Activated CD8-positive, alpha-beta T cell treated with anti-CD3 and anti-CD28 coated beads for 36 hours (primary cell): ENCODE measurements at regions of chr1 and their contacts with region 1.

Region 1: GRCh38 chr1:235971571-235972310 is 93.1 kb downstream of the NID1 start:
- DNase-seq: peak; percentile 95
- ATAC-seq: peak; percentile 99
- H3K4me3 Mint-ChIP-seq: peak overlapping the region; percentile 70
- H3K27ac Mint-ChIP-seq: peak overlapping the region; percentile 94
- H3K4me1 Mint-ChIP-seq: peaks cover 16% of the 10 kb centered on the region
- H3K27me3 Mint-ChIP-seq: no peaks in the 10 kb centered on the region
- CTCF ChIP-seq: peak; percentile 83

Region 2: GRCh38 chr1:235504496-235505222 is 467.1 kb before region 1 on chr1:
- CTCF ChIA-PET with region 1: interaction called, 19 read pairs
- POLR2A ChIA-PET with region 1: no interaction called
- intact Hi-C with region 1: no loop called
- DNase-seq: peak; percentile 99
- ATAC-seq: peak; percentile 93
- H3K4me3 Mint-ChIP-seq: peak overlapping the region; percentile 89
- H3K27ac Mint-ChIP-seq: peak overlapping the region; percentile 98
- H3K4me1 Mint-ChIP-seq: peaks cover 30% of the 10 kb centered on the region
- H3K27me3 Mint-ChIP-seq: no peaks in the 10 kb centered on the region
- CTCF ChIP-seq: peak; percentile 92

Region 3: GRCh38 chr1:235783148-235783776 is 188.5 kb before region 1 on chr1:
- CTCF ChIA-PET with region 1: interaction called, 49 read pairs
- POLR2A ChIA-PET with region 1: no interaction called
- intact Hi-C with region 1: no loop called
- DNase-seq: no peak
- ATAC-seq: no peak
- H3K4me3 Mint-ChIP-seq: no peak overlapping the region
- H3K27ac Mint-ChIP-seq: no peak overlapping the region
- H3K4me1 Mint-ChIP-seq: no peaks in the 10 kb centered on the region
- H3K27me3 Mint-ChIP-seq: no peaks in the 10 kb centered on the region
- CTCF ChIP-seq: peak; percentile 78

Region 4: GRCh38 chr1:235843461-235843961 is 128.2 kb before region 1 on chr1:
- CTCF ChIA-PET with region 1: interaction called, 76 read pairs
- POLR2A ChIA-PET with region 1: interaction called, 5 read pairs
- intact Hi-C with region 1: no loop called
- DNase-seq: no peak
- ATAC-seq: peak; percentile 69
- H3K4me3 Mint-ChIP-seq: no peak overlapping the region
- H3K27ac Mint-ChIP-seq: no peak overlapping the region
- H3K4me1 Mint-ChIP-seq: peaks cover 78% of the 10 kb centered on the region
- H3K27me3 Mint-ChIP-seq: no peaks in the 10 kb centered on the region
- CTCF ChIP-seq: peak; percentile 71

Region 5: DNA sequence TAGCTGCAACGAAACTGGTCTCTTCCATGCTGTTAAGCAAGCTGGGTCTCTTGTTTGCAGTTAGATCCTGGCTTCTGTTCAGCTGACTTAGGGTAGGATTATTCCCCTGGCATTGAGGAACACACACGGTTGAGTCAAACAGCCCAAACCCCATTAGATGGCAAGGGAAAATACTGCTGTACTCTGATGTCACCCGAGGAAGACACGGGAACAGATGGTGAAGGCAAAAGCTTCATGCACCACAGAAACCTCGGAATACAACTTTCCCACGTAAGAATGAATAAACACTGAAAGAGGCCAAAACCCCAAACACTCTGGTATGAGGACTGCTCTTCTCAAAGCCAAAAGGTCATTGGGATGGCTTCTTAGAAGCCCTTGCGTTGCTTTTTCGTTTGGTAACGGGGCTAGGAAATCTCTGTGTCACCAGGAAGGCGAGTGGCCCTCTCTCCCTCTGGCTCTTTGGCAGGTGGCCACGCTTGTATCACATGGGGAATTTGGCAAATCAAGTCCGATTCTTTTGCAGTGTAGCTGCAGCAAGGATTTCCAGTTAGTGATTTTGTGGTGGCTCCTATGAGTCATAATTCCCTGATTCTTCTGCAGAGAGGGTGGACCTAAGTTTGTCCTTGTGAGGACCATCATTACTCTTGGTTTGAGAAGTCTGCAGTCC is 88.3 kb before region 1 on chr1:
- CTCF ChIA-PET with region 1: interaction called, 30 read pairs
- POLR2A ChIA-PET with region 1: no interaction called
- intact Hi-C with region 1: no loop called
- DNase-seq: peak; percentile 62
- ATAC-seq: peak; percentile 1
- H3K4me3 Mint-ChIP-seq: peak overlapping the region; percentile 65
- H3K27ac Mint-ChIP-seq: peak overlapping the region; percentile 55
- H3K4me1 Mint-ChIP-seq: peaks cover 63% of the 10 kb centered on the region
- H3K27me3 Mint-ChIP-seq: no peaks in the 10 kb centered on the region
- CTCF ChIP-seq: no peak

Region 6: DNA sequence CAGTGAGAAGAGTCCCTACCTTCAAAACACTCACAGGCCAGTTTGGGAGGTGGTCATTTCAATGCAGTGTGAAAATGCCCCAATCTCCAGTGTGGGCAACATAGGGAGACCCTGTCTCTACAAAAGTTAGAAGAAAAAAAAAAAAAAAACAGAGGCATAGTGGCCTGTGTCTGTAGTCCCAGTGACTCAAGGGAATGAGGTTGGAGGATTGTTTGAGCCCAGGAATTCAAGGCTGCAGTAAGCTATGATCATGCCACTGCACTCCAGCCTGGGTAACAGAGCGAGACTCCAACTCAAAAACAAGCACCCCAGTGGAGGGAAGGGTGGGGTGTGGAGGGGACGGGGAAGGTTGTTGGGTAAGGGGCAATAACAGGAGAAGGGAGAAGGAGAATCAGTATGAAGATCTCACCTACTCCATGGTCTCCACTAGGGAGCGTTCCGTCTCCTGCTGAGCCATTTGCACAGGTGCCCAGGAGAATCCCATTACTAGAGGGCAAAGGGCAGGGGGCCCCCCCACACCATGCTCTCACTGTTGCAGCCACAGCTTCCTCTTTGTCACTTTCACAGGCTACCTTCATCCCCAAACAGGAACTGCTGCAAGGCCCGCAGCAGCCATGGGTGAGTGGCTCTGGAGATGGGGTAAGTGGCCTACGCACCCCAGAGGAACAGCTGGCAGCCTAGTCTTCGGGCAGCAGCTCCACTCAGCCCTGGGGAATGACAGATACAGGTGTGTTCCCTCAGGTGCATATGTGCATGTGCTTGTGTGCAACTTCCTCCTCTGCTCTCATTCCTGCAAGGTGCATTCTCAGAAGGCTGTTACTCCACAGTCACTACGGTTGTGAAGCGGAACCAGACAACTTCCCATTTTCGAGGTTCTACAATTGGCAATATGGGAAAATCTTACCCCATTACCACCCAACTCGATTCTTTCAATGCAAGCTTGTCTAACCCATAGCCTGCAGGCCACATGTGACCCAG is 17.1 kb before region 1 on chr1:
- CTCF ChIA-PET with region 1: interaction called, 72 read pairs
- POLR2A ChIA-PET with region 1: interaction called, 7 read pairs
- intact Hi-C with region 1: no loop called
- DNase-seq: peak; percentile 80
- ATAC-seq: peak; percentile 82
- H3K4me3 Mint-ChIP-seq: no peak overlapping the region
- H3K27ac Mint-ChIP-seq: peak overlapping the region; percentile 26
- H3K4me1 Mint-ChIP-seq: peaks cover 52% of the 10 kb centered on the region
- H3K27me3 Mint-ChIP-seq: no peaks in the 10 kb centered on the region
- CTCF ChIP-seq: no peak

Region 7: GRCh38 chr1:236064674-236065508 is 93.2 kb after region 1 on chr1 and contains the start of gene NID1:
- CTCF ChIA-PET with region 1: interaction called, 10 read pairs
- POLR2A ChIA-PET with region 1: no interaction called
- intact Hi-C with region 1: no loop called
- DNase-seq: peak; percentile 13
- ATAC-seq: peak; percentile 19
- H3K4me3 Mint-ChIP-seq: peak within 1 kb of the TSS; percentile 47
- H3K27ac Mint-ChIP-seq: no peak within 1 kb of the TSS
- H3K4me1 Mint-ChIP-seq: peaks cover 21% of the 10 kb centered on the region
- H3K27me3 Mint-ChIP-seq: peaks cover 26% of the 10 kb centered on the region
- CTCF ChIP-seq: no peak
- total RNA-seq, gene NID1: 0.04 to 0.07 TPM

Region 8: DNA sequence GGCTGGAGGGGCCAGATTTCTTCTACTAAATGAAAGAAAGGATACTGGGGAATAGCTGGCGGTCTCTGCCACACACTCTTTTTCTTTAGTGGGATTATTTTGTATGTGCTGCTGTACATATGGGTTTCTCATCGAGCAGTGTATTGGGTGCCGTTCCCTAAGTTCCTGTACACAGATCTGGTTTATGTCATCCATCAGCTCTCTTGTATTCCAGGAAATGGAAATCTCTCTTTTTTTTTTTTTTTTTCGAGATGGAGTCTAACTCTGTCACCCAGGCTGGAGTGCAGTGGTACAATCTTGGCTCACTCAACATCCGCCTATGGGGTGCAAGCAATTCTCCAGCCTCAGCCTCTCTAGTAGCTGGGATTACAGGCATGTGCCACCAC is 120.2 kb after region 1 on chr1:
- CTCF ChIA-PET with region 1: no interaction called
- POLR2A ChIA-PET with region 1: no interaction called
- intact Hi-C with region 1: no loop called
- DNase-seq: no peak
- ATAC-seq: no peak
- H3K4me3 Mint-ChIP-seq: no peak overlapping the region
- H3K27ac Mint-ChIP-seq: no peak overlapping the region
- H3K4me1 Mint-ChIP-seq: no peaks in the 10 kb centered on the region
- H3K27me3 Mint-ChIP-seq: peaks cover 16% of the 10 kb centered on the region
- CTCF ChIP-seq: no peak